Activated naive CD4-positive, alpha-beta T cell treated with anti-CD3 and anti-CD28 coated beads for 36 hours (primary cell): ENCODE measurements at regions of chr1 and their contacts with region 1.

Region 1: DNA sequence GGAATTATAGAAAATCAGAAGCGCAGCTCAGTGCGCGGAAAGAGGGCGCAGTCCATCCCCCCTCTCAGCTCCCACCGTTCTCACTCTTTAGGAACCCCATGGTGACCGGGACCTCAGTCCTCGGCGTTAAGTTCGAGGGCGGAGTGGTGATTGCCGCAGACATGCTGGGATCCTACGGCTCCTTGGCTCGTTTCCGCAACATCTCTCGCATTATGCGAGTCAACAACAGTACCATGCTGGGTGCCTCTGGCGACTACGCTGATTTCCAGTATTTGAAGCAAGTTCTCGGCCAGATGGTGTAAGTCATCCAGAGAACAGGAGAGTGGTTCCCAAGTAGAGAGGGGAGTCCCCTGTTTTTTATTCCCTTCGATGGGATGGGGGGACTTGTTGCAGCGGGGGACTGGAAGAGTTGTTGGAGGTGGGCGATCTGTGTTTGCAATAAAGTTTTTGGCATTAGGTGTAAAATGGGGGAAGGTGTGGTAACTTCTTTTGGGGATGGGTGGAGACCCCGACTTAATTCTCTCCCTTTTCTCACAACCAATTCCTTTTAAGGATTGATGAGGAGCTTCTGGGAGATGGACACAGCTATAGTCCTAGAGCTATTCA is 620 bp downstream of the PSMB4 start:
- DNase-seq: peak; percentile 40
- H3K4me3 Mint-ChIP-seq: peak overlapping the region; percentile 84
- H3K27ac Mint-ChIP-seq: peak overlapping the region; percentile 94
- H3K4me1 Mint-ChIP-seq: peaks cover 26% of the 10 kb centered on the region
- H3K27me3 Mint-ChIP-seq: no peaks in the 10 kb centered on the region

Region 2: GRCh38 chr1:151294742-151295462 is 105.1 kb before region 1 on chr1:
- CTCF ChIA-PET with region 1: no interaction called
- intact Hi-C with region 1: no loop called
- DNase-seq: no peak
- H3K4me3 Mint-ChIP-seq: no peak overlapping the region
- H3K27ac Mint-ChIP-seq: peak overlapping the region; percentile 56
- H3K4me1 Mint-ChIP-seq: no peaks in the 10 kb centered on the region
- H3K27me3 Mint-ChIP-seq: no peaks in the 10 kb centered on the region

Region 3: DNA sequence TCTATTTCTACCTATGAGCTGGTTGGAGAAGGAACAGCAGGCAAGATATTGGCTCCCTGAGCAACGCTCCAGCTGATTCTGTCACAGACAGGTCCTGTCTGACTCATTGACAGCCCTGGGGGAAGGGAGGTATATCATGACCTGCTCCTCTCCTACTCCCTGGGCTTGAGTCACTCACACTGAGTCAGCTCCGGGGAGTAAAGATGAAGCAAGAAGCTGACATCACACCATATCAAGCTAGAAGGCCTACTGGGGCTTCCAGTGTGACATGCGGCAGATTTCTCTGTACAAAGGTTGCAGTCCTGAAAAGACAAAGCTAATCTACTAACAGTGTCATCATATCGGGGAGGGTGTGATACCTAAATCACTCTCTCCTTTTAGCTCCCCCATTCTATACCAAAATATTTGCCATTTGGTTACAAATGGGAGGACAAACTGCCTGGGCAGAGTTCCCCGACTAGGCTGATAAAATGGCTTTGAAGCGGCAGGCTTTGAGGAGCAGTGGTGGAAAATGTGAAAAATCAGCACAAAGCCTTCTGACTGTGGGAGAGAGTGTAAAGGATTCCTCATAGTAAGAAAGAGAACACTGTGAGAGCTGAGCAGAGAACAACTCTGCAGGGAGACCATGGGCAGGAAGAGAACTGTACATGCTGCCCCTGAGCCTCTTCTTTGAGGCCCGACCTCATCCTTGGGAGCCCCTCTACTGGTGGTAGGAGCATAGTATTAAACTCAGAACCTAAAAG is 88.2 kb before region 1 on chr1:
- CTCF ChIA-PET with region 1: interaction called, 4 read pairs
- intact Hi-C with region 1: loop called (anchors 1 kb)
- DNase-seq: peak; percentile 94
- H3K4me3 Mint-ChIP-seq: no peak overlapping the region
- H3K27ac Mint-ChIP-seq: peak overlapping the region; percentile 92
- H3K4me1 Mint-ChIP-seq: peaks cover 37% of the 10 kb centered on the region
- H3K27me3 Mint-ChIP-seq: no peaks in the 10 kb centered on the region

Region 4: DNA sequence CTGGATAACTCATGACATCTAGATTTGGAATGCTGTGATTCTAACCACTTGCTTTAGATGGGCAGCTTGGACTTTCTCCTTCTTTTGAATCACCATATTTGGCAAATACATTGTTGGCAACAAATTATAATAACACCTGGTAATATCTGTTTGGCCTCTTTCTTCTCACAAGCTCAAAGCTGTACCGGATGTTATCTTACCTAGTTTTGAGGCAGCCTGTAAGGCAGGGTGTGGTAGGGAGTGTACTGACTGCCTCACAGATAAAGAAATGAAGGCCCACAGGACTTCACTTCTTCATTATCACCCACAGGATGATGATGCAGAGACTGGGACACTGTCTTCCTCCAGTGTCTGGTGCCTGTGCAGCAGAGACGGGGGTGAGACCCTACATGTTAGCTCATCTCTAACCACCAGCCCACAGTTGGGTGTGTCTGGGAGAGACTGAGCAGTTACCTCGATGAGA is 168.7 kb after region 1 on chr1:
- CTCF ChIA-PET with region 1: no interaction called
- intact Hi-C with region 1: no loop called
- DNase-seq: no peak
- H3K4me3 Mint-ChIP-seq: no peak overlapping the region
- H3K27ac Mint-ChIP-seq: no peak overlapping the region
- H3K4me1 Mint-ChIP-seq: no peaks in the 10 kb centered on the region
- H3K27me3 Mint-ChIP-seq: no peaks in the 10 kb centered on the region